ENCODE measurements at regions of chr5 and their contacts with region 1.

Region 1: DNA sequence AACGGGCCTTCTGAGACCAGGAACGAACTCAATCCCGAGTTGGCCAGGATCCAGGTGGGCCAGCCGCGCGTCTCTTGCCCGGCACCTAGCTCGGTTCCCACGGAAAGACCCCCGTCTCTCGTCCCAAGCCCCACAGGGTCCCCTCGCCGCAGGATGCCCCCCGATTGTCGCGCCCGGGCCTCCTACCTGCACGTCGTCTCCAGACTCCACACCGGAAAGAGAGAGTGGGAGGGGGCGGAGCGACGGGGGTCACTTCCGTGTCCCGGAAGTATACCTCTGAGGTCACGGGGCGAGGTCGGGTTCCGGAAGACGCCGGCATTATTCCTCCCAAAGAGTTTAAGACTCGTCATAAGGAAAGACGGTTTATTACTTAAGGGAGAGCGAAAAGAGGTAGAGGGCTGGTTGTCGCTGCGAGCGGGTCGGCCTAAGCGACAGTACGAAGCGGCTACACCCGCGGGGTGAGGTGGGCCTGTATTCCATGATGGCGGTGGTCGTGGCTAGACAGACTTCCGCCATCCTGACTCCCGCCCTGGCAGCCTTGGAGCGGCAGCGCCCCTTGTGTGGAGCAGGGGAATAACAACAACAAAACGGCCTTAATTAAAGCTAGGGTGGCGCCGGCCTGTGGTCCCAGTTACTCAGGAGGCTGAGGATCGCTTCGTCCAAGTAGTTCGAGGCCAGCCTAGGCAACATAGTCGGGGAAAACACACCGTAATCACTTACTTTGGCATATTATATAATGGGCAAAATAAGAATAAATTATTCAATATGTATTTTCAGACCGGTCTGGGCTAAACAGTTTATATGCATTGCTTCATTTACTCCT is at the start of gene RPS14:
- DNase-seq: peak; percentile 76
- H3K4me3 ChIP-seq: peak within 1 kb of the TSS; percentile 97
- H3K27ac ChIP-seq: peak within 1 kb of the TSS; percentile 94
- H3K27me3 ChIP-seq: no peaks in the 10 kb centered on the region
- CTCF ChIP-seq: peak; percentile 85
- polyA plus RNA-seq, gene RPS14: 3,620 and 4,046 TPM in 2 replicates

Region 2: DNA sequence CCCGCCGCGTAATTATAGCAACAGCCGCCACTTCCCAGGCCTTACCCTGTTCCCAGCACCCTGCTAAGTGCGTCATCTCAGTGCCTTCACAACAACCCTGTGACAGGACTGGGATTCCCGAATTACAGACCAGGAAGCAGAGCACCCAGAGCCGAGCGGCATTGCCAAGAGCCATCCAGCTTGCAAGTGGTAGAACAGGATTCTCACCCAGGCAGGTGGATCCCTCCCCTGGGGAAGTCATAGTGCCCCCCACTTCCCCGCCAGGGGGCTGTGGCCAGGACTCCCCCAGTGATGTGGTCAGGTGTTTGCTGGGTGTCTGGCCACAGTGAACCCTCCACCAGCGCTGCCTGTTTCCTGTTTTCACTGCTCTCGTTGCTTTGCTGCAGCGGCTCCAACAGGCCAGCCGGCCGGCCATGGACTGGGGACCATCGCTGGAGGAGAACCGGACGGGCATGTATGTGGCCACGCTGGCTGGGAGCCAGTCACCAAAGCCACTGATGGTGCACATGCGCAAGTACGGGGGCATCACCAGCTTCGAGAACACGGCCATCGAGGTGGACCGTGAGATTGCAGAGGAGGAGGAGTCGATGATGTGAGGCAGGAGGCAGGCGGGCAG is 240.6 kb before region 1 on chr5:
- CTCF ChIA-PET with region 1: no interaction called
- POLR2A ChIA-PET with region 1: no interaction called
- DNase-seq: no peak
- H3K4me3 ChIP-seq: no peak overlapping the region
- H3K27ac ChIP-seq: peak overlapping the region; percentile 3
- H3K27me3 ChIP-seq: no peaks in the 10 kb centered on the region
- CTCF ChIP-seq: no peak

Region 3: DNA sequence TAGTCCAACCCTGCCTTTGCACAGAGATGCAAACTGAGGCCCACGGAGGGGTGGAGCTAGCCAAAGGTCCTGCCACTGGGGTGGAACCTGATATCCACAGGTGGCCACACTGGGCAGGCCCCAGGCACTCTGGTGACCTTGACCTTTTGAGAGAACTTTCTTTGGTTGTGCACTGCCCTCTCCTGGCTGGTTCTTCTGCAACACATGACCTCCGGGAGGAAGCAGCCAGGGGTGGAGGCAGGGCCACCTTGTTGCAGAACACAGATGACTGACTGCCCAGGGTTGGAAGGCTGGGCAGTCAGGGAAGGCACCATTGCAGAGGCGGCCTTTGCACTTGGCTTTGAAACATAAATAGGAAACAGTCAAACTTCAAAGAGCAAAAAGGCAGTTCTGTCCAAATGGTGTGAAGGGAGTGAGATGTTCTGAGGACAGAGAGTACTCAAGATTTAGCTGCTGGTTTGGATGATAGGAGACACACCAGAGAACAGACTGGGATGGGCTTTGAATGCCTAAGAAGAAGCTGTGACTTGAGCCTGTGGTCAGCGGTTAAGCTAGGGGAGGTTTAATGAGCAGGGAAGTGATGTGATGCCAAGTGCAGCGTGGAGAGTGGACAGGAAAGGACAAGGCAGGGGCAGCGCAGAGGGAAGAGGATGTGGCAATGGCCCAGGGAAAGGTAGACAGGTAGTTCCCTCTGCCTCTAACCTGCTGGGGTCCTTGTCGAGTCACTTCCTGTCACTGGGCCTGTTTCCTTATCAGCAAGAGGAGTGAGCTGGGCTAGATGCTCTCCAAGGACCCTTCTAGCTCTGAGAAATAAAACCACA is 99.0 kb before region 1 on chr5:
- CTCF ChIA-PET with region 1: no interaction called
- POLR2A ChIA-PET with region 1: no interaction called
- DNase-seq: peak; percentile 43
- H3K4me3 ChIP-seq: no peak overlapping the region
- H3K27ac ChIP-seq: no peak overlapping the region
- H3K27me3 ChIP-seq: no peaks in the 10 kb centered on the region
- CTCF ChIP-seq: peak; percentile 68

Region 4: DNA sequence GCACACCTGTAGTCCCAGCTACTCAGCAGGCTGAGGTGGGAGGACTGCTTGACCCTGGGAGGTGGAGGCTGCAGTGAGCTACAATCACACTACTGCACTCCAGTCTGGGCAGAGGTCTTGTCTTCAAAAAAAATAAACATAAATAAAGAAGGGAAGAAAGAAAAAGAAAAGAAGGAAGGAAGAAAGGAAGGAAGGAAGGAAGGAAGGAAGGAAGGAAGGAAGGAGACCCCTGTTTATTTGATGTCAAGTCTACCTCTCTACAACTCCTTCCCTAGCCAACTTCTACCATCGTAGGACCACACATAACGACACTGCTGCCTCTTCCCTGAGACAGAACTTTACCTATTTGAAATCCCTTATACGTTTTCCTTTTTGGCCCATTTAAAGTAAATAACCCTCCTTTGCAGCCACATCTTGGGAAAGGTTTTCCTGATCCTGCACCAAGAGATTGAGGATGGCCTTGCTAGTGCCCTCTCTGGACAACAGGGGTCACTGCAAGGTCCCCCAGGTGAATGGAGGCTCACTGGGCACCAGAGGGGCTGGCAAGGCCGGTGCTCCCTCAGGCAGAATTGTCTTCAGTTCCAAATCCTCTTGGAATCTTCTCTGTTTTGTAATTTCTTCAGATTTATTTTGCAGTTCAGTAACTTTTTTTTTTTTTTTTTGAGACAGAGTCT is 10.7 kb before region 1 on chr5:
- CTCF ChIA-PET with region 1: interaction called, 10 read pairs
- POLR2A ChIA-PET with region 1: interaction called, 3 read pairs
- DNase-seq: no peak
- H3K4me3 ChIP-seq: no peak overlapping the region
- H3K27ac ChIP-seq: no peak overlapping the region
- H3K27me3 ChIP-seq: no peaks in the 10 kb centered on the region
- CTCF ChIP-seq: peak; percentile 57

Measured in AG04450 (cell line).